Calu3 (cell line): ENCODE measurements at regions of chr12 and their contacts with region 1.

Region 1: DNA sequence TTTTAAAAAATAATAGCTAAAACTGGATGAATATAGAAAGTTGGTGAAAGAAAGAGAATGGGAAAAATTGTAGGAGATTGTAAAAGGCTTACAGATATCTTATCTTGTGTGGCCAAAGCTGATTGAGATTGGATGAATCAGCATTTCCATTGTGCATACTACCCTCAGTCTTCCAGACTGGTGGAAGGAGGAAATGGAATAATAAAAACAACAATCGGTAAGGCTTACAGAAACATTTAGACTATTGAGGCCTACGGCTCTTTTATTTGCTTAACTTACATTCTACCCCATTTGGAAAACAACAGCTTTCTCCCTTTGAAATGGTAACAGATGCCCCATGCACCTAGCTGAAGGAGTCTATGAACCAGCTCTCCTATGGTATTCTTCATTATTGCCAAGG is 129.8 kb downstream of the PTPRB start:
- DNase-seq: no peak
- H3K4me3 Mint-ChIP-seq: no peak overlapping the region
- H3K27ac Mint-ChIP-seq: peak overlapping the region; percentile 60
- H3K4me1 Mint-ChIP-seq: peaks cover 17% of the 10 kb centered on the region
- H3K27me3 Mint-ChIP-seq: no peaks in the 10 kb centered on the region
- CTCF ChIP-seq: no peak

Region 2: DNA sequence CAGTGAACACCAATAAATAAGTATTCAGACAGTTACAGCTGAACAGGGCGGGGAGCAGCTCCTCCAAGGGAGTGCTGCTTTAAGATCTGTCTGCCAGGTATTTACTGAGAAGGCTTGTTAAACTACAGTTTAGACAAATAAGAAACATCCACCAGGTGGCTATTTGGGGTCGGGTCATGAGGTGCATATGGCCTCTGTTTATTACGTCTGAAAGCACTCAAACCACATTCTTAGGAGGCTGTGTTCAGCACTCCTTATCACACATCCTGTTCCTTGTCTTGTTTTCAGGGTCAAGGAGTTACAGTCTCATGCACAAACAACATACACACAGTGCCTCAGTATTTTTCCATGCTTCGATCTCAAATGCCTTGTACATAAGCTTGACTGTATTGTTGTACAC is 62.5 kb before region 1 on chr12:
- CTCF ChIA-PET with region 1: no interaction called
- intact Hi-C with region 1: loop called (anchors 2 kb)
- DNase-seq: no peak
- H3K4me3 Mint-ChIP-seq: no peak overlapping the region
- H3K27ac Mint-ChIP-seq: no peak overlapping the region
- H3K4me1 Mint-ChIP-seq: peaks cover 43% of the 10 kb centered on the region
- H3K27me3 Mint-ChIP-seq: no peaks in the 10 kb centered on the region
- CTCF ChIP-seq: no peak